OCI-LY7 (cell line): ENCODE measurements at regions of chr22 and their contacts with region 1.

Region 1: GRCh38 chr22:47996446-47996857 is 1234.0 kb downstream of the TBC1D22A start:
- DNase-seq: peak; percentile 95
- H3K4me3 ChIP-seq: no peak overlapping the region
- H3K27ac ChIP-seq: peak overlapping the region; percentile 83
- H3K4me1 ChIP-seq: peaks cover 36% of the 10 kb centered on the region
- CTCF ChIP-seq: no peak

Region 2: GRCh38 chr22:47794851-47795250 is 201.6 kb before region 1 on chr22:
- CTCF ChIA-PET with region 1: no interaction called
- POLR2A ChIA-PET with region 1: no interaction called
- intact Hi-C with region 1: loop called (anchors 1 kb)
- DNase-seq: no peak
- H3K4me3 ChIP-seq: no peak overlapping the region
- H3K27ac ChIP-seq: no peak overlapping the region
- H3K4me1 ChIP-seq: peaks cover 16% of the 10 kb centered on the region
- CTCF ChIP-seq: no peak

Region 3: DNA sequence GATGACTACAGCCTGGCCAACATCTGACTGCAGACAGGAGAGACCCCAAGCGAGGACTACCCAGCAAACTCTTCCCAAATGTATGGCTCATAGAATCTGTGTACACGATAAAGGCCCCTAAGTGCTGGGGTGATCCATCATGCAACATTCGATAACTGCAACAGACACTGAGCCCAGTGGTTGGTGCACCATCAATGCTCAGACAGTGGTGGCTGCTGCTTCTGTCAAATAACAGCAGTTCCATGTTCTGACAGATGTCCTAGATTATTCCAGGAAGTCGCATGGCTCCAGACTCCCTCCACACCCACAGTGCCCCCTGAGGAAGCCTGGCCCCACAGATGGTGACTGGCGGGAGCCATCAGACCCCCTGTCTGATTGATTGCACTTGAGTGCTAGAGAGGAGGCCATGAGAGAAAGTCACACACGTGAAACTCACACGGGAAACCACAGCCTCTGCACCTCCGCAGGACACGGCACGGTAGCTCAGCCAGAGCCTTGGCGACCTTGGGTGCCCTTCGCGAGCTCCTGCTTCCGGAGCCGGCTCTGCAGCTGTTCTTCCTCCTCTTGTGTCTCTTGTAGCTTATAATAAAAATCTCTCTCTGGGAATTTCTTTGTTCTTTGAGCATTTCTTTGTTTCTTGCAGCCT is 78.1 kb before region 1 on chr22:
- CTCF ChIA-PET with region 1: no interaction called
- POLR2A ChIA-PET with region 1: interaction called, 5 read pairs
- intact Hi-C with region 1: loop called (anchors 1 kb)
- DNase-seq: peak; percentile 94
- H3K4me3 ChIP-seq: peak overlapping the region; percentile 55
- H3K27ac ChIP-seq: peak overlapping the region; percentile 97
- H3K4me1 ChIP-seq: peaks cover 68% of the 10 kb centered on the region
- CTCF ChIP-seq: peak; percentile 27; the same call in 1 of the 2 replicates

Region 4: DNA sequence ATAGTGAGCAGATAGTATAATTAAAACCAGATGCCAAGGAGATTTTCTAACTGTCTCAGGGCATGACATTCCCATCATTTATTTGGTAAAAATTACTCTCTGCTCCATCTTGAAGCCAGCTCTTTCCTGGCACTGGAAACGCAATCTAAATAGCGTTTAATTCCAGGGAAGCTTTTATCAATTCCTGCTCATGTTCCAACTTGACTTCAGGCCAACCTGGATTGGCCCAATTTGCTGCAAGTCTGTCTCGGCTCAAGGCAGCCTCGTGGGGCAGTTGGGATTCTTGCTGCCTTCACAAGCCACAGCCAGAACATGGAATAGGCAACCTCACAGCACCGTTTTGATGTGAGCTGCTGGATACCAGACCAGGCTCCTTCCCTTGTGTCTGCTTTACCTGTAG is 21.9 kb after region 1 on chr22:
- CTCF ChIA-PET with region 1: no interaction called
- POLR2A ChIA-PET with region 1: no interaction called
- intact Hi-C with region 1: no loop called
- DNase-seq: no peak
- H3K4me3 ChIP-seq: no peak overlapping the region
- H3K27ac ChIP-seq: no peak overlapping the region
- H3K4me1 ChIP-seq: peaks cover 20% of the 10 kb centered on the region
- CTCF ChIP-seq: no peak

Region 5: DNA sequence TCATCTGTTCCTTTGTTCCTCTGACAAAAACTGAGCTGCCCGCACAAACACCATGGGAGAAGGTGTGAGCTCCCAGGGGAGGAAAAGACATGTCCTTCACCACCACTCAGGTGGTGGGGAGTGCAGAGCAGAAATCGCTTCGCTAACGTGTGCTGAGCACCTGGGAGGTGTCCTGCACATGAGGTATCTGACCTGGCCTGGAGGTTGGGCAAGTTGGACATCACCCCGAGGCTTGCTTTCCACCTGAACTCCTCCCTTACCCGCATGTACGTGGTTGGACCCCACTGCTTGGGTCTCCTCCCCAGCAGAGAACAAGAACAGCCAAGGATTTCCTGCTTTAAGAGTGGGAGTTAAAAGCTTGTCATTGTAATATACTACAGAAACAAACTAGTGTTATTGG is 80.4 kb after region 1 on chr22:
- CTCF ChIA-PET with region 1: no interaction called
- POLR2A ChIA-PET with region 1: no interaction called
- intact Hi-C with region 1: no loop called
- DNase-seq: no peak
- H3K4me3 ChIP-seq: no peak overlapping the region
- H3K27ac ChIP-seq: no peak overlapping the region
- H3K4me1 ChIP-seq: peaks cover 69% of the 10 kb centered on the region
- CTCF ChIP-seq: no peak

Region 6: DNA sequence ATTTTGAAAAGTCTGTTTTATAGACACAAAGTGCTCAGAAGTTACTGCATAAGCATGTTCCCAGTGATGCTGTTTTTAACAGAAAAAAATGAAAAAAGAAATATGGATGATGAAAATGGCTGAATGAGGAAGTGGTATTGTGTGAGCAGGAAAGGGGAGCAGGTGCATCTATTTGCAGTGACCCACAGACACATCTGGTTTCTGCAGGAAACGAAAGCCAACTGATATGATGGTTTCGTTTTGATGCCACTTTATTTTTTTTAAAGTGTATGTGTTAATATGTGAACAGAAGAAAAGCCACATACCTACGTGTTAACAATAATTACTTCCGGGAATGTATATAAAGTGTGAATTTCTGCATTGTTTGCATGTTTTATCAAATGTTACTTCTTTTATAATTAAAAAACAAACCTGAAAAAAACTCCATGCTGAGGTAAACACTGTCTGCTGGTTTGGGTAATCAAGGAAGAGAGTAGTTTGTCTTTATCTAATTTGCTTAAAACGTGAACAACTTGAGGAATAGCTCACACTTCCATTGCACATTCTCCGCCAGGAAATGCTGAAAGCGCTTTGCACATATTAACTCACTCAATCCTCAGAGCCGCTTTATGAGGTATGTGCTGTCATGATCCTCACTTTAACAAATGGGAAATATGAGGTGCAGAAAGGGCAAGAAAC is 101.9 kb after region 1 on chr22:
- CTCF ChIA-PET with region 1: no interaction called
- POLR2A ChIA-PET with region 1: no interaction called
- intact Hi-C with region 1: loop called (anchors 1 kb)
- DNase-seq: peak; percentile 96
- H3K4me3 ChIP-seq: peak overlapping the region; percentile 58
- H3K27ac ChIP-seq: peak overlapping the region; percentile 98
- H3K4me1 ChIP-seq: peaks cover 81% of the 10 kb centered on the region
- CTCF ChIP-seq: no peak

Region 7: GRCh38 chr22:48492366-48493320 is 496.2 kb after region 1 on chr22:
- CTCF ChIA-PET with region 1: no interaction called
- POLR2A ChIA-PET with region 1: no interaction called
- intact Hi-C with region 1: loop called (anchors 5 kb)
- DNase-seq: peak; percentile 74
- H3K4me3 ChIP-seq: no peak overlapping the region
- H3K27ac ChIP-seq: no peak overlapping the region
- H3K4me1 ChIP-seq: peaks cover 8% of the 10 kb centered on the region
- CTCF ChIP-seq: peak; percentile 97